ENCODE measurements at regions of chr9 and their contacts with region 1.

Region 1: GRCh38 chr9:123225374-123225813 is 43.0 kb downstream of the STRBP start:
- DNase-seq: peak; percentile 50
- H3K4me3 Mint-ChIP-seq: peak overlapping the region; percentile 24
- H3K27ac Mint-ChIP-seq: peak overlapping the region; percentile 68
- H3K4me1 Mint-ChIP-seq: peaks cover 23% of the 10 kb centered on the region
- H3K27me3 Mint-ChIP-seq: no peaks in the 10 kb centered on the region

Region 2: GRCh38 chr9:122827761-122828093 is 397.7 kb before region 1 on chr9:
- intact Hi-C with region 1: loop called (anchors 1 kb)
- DNase-seq: no peak
- H3K4me3 Mint-ChIP-seq: peak overlapping the region; percentile 96
- H3K27ac Mint-ChIP-seq: peak overlapping the region; percentile 84
- H3K4me1 Mint-ChIP-seq: peaks cover 36% of the 10 kb centered on the region
- H3K27me3 Mint-ChIP-seq: no peaks in the 10 kb centered on the region

Region 3: DNA sequence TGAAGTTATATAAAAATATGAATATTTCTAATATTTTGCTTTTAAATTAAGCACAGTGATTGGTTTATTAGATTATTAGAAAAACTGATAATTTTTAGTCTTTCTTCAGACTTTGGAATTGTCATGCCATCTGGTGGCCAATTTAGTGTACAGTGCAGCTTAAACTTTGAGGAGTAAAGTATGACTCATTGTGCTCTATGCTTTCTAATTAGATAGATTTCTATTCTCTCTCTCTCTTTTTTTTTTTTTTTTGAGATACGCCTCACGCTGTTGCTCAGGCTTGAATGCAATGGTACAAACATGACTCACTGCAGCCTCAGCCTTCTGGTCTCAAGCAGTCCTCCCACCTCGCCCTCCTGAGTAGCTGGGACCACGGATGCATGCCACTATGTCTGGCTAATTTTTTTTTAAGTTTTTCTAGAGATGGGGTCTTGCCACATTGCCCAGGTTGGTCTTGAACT is 234.0 kb before region 1 on chr9:
- intact Hi-C with region 1: loop called (anchors 5 kb)
- DNase-seq: no peak
- H3K4me3 Mint-ChIP-seq: no peak overlapping the region
- H3K27ac Mint-ChIP-seq: no peak overlapping the region
- H3K4me1 Mint-ChIP-seq: peaks cover 5% of the 10 kb centered on the region
- H3K27me3 Mint-ChIP-seq: no peaks in the 10 kb centered on the region

Region 4: DNA sequence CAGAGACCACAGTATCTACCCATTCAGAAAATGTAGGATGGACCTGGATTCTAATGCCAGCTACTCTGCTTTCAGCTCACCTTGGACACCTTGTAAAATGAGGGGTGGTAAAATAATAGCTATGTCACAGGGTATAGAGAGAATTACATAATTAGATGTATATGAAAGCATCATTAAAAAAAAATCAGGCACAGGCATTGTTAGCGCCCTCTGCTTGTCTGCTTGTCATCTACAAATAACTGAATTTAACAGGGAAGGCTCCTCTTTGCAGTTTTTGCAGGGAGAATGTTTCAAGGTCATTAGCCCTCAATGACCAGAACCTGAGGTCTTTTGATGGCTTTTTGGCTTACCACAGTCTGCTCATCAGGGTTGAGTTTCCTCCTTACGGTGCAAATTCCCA is 133.9 kb before region 1 on chr9:
- intact Hi-C with region 1: no loop called
- DNase-seq: no peak
- H3K4me3 Mint-ChIP-seq: no peak overlapping the region
- H3K27ac Mint-ChIP-seq: no peak overlapping the region
- H3K4me1 Mint-ChIP-seq: no peaks in the 10 kb centered on the region
- H3K27me3 Mint-ChIP-seq: no peaks in the 10 kb centered on the region

Region 5: DNA sequence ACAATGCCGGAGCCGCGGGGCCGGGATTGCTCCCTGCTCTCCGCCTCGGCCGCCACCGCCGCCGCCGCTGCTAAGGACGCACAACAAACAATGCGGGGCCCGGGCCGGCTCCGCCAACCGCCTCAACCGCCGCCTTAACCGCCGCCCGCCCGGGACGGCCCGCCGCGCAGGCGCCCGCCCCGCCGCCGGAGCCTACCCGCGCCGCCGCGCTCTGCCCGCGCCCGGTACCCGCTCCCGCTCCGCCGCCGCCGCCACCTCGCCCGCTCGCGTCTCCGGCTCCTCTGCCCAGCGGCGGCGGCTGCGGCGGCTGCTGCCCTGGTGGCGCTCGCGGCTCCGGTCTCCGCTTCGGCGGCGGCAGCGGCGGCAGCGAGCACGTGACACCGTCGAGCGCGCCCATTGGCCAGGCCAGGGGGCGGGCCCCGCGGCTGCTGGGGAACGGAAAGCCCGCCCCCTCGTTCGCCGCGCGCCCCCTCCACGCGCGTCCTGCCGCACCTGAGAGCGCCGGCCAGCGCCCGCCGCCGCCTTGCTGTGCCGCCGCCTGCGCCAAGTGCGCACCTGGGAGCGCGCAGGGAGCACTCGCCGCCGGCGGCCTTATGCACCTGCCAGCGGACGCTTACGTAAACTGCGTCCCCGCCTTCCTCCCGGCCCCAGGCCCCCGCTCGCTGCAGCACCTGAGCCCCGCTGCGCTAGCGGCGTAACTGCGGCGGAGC is 43.0 kb after region 1 on chr9 and contains the start of gene STRBP:
- intact Hi-C with region 1: loop called (anchors 1 kb)
- DNase-seq: peak; percentile 91
- H3K4me3 Mint-ChIP-seq: peak within 1 kb of the TSS; percentile 86
- H3K27ac Mint-ChIP-seq: peak within 1 kb of the TSS; percentile 53
- H3K4me1 Mint-ChIP-seq: peaks cover 6% of the 10 kb centered on the region
- H3K27me3 Mint-ChIP-seq: peaks cover 7% of the 10 kb centered on the region
- total RNA-seq, gene STRBP: 22.1 and 24.2 TPM in 2 replicates

Region 6: DNA sequence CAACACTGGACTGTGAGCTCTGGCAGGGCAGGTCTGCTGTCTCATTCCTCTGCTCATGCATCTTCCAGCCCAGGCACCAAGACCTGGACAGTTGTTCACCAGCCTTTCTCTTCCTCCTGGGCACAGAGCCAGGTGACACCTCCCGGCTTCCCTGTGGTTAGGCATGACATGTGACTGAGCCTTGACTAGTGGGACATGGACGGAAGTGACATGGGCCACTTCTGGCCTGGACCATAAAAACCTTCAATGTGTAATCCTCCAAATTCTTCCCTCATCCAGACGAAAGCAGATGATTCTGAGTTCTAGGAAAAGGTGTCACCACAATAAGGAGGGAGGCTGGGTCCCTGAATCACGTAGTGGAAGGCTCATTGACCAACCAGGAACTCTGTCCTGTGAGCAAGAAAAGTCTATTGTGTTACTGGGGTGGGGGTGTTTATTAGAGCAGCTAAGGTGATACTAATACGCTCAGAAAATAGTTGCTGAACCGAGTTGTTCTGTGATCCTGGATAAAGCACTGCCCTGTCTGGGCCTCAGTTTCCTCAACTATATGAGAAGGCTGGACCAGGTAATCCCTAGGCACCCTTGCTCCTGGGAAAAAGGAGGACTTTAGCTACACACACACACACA is 104.0 kb after region 1 on chr9:
- intact Hi-C with region 1: no loop called
- DNase-seq: no peak
- H3K4me3 Mint-ChIP-seq: no peak overlapping the region
- H3K27ac Mint-ChIP-seq: no peak overlapping the region
- H3K4me1 Mint-ChIP-seq: peaks cover 9% of the 10 kb centered on the region
- H3K27me3 Mint-ChIP-seq: peaks cover 3% of the 10 kb centered on the region

Region 7: DNA sequence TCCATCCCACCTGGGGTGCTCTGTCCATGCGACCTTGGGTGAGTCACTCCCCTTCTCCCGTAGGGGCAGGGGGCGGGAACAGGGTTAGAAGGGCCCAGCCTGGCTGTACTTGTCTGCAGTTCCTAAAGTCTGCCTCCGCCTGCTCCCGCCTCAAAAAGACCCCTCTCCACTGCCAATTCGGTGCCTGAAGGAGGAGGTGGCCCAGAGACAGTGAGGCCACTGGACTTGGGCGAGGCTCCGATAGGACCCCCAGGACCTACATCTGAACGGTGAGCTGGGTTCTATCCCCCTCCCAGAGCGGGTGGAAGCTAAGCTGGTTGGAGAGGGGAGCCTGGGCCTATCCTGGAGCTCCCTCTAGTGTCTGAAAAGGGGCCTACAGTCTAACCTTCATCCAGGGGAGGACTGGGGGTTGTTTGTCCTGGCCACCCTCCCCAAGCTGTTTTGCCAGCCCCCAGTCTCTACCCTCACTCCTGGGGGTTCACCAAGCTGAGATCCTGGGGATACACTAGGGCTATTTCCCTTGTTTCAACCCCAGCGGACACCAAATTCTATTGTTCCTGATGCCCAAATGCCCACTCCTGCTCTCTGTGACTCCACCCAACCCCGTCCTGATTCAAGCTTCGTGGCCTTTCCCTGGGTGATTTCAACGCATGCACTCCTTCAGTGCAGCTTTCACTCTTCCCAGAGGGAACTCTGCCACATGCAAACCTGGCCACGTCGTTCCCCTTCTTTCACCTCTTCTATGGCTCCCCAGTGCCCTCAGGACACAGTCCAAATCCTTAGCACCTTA is 124.5 kb after region 1 on chr9:
- intact Hi-C with region 1: loop called (anchors 1 kb)
- DNase-seq: peak; percentile 55
- H3K4me3 Mint-ChIP-seq: no peak overlapping the region
- H3K27ac Mint-ChIP-seq: no peak overlapping the region
- H3K4me1 Mint-ChIP-seq: no peaks in the 10 kb centered on the region
- H3K27me3 Mint-ChIP-seq: peaks cover 12% of the 10 kb centered on the region